Ovary (tissue), 10 donors: ENCODE measurements at regions of chr1 and their contacts with region 1.

Region 1: GRCh38 chr1:99264201-99265021 is at the start of gene PLPPR4:
- DNase-seq: no peak
- H3K4me3 ChIP-seq: peak within 1 kb of the TSS; percentile 21
- H3K27ac ChIP-seq: no peak within 1 kb of the TSS
- H3K4me1 ChIP-seq: no peaks in the 10 kb centered on the region
- H3K27me3 ChIP-seq: no peaks in the 10 kb centered on the region
- CTCF ChIP-seq: no peak
- EP300 ChIP-seq: no peak
- POLR2A ChIP-seq: no peak
- total RNA-seq, gene PLPPR4: 0.05 to 0.34 (median 0.22) TPM in 4 of 7 donors, not detected in the others

Region 2: DNA sequence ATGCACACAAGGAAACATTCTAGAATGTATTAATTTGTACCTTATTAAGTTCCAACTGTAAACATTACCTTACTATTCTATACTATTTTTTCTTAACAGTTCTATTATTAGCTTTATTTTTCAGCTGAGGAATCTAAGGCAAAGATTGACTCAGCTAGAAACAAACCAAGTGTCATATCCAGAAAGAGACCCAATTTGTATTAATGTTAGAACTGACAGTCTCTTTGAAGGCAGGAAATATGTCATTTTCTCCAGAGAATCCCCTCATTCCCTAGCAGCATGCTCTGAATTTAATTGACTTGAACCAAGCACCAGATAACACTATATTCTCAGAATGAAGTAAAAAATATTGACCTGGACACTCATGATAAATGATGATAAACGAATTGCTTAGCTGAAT is 178.4 kb before region 1 on chr1:
- intact Hi-C with region 1: no loop called
- DNase-seq: no peak
- H3K4me3 ChIP-seq: no peak overlapping the region
- H3K27ac ChIP-seq: no peak overlapping the region
- H3K4me1 ChIP-seq: no peaks in the 10 kb centered on the region
- H3K27me3 ChIP-seq: no peaks in the 10 kb centered on the region
- CTCF ChIP-seq: no peak
- EP300 ChIP-seq: no peak
- POLR2A ChIP-seq: no peak

Region 3: DNA sequence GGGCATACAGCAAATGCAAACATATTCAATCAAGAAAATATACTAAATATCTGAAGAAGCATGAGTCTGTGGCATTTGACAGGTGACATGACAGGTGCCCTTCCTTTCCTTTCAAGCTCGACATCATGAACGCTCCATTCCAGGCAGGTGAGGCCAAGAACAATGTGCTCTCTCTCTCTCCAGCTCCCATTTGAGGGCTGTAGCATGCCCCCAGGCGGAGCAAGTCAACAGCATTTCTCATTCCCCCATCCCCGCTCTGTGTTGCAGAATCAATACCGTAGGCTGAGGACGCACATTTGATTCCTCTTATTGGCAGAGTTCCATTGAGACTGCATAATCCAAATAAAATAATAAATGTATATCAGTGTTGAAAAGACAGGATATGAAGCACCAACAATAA is 24.7 kb before region 1 on chr1:
- intact Hi-C with region 1: loop called in 1 of 4 experiments (anchors 1 kb)
- DNase-seq: no peak
- H3K4me3 ChIP-seq: no peak overlapping the region
- H3K27ac ChIP-seq: no peak overlapping the region
- H3K4me1 ChIP-seq: no peaks in the 10 kb centered on the region
- H3K27me3 ChIP-seq: no peaks in the 10 kb centered on the region
- CTCF ChIP-seq: no peak
- EP300 ChIP-seq: no peak
- POLR2A ChIP-seq: no peak

Region 4: GRCh38 chr1:99758073-99758511 is 493.7 kb after region 1 on chr1:
- intact Hi-C with region 1: no loop called
- DNase-seq: no peak
- H3K4me3 ChIP-seq: no peak overlapping the region
- H3K27ac ChIP-seq: no peak overlapping the region
- H3K4me1 ChIP-seq: peaks cover 2% of the 10 kb centered on the region
- H3K27me3 ChIP-seq: no peaks in the 10 kb centered on the region
- CTCF ChIP-seq: no peak
- EP300 ChIP-seq: no peak
- POLR2A ChIP-seq: no peak